ENCODE measurements at regions of chr9 and their contacts with region 1.

Region 1: DNA sequence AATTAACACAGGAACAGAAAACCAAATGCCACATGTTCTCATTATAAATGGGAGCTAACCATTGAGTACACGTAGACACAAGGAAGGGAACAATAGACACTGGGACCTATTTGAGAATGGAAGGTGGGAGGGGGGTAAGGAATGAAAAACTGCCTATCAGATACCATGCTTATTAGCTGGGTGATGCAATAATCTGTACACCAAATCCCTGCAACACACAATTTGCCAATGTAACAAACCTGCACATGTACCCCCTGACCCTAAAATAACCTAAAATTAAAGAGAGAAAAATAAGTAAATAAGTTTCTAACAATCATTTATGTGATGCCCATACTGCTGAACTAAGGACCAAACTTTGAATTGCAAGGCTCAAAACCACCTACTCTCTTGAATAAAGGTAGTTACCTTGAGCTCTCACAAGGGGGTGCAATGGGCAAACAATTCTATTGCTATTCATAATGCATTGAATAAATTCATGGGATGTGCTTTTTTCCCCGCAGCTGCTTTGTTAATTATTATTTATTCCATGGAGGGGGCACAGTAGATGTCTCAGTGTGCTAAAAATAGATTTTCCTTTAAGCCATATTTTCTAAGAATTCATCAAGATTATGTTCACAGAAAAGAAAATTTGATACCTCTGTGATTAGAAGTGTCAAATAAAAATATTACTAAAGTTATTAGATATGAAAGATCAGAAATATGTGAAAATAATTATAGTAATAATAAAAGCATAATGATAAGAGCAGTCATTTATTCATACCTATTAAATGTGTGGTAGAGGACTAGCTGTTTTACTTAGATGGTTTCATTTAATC is 76.2 kb upstream of the PTPN3 start:
- DNase-seq: no peak
- ATAC-seq: peak; percentile 77
- H3K4me3 Mint-ChIP-seq: no peak overlapping the region
- H3K27ac Mint-ChIP-seq: no peak overlapping the region
- H3K4me1 Mint-ChIP-seq: no peaks in the 10 kb centered on the region
- H3K27me3 Mint-ChIP-seq: no peaks in the 10 kb centered on the region
- CTCF ChIP-seq: peak; percentile 43

Region 2: GRCh38 chr9:109652964-109653363 is 78.7 kb after region 1 on chr9:
- CTCF ChIA-PET with region 1: interaction called, 13 read pairs
- POLR2A ChIA-PET with region 1: no interaction called
- DNase-seq: no peak
- ATAC-seq: peak; percentile 81
- H3K4me3 Mint-ChIP-seq: no peak overlapping the region
- H3K27ac Mint-ChIP-seq: no peak overlapping the region
- H3K4me1 Mint-ChIP-seq: peaks cover 8% of the 10 kb centered on the region
- H3K27me3 Mint-ChIP-seq: no peaks in the 10 kb centered on the region; the same call in 1 of the 2 replicates
- CTCF ChIP-seq: no peak

Region 3: DNA sequence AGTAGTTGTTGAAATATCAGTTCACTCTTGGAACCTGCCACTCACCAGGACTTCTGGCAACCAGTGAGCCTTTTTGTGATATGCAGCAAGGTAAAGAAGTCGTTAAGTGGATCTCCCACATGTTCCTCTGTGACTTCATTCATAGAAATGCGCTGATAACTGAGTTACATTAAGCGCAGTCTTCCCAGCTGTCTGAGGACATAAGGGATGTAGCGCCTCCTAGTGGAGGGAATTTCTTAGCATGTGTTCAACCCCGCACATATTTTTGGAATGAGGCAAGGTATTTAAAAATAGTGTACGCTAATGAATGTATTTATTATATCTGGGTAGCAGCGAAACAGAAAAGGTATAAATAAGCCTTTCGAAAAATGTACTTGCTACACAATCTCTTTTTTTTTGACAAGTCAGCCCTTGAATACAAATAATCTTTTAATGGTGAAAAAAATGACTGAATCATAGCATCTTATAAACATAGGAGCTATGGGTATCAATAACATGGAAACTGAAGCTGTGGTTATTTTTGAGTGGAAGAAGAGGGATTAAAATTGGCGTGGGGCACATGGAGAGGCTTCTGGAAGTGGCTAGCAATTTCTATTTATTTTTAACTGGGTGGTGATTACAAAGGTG is 243.7 kb after region 1 on chr9:
- CTCF ChIA-PET with region 1: interaction called, 16 read pairs
- POLR2A ChIA-PET with region 1: no interaction called
- DNase-seq: peak; percentile 62
- ATAC-seq: peak; percentile 78
- H3K4me3 Mint-ChIP-seq: no peak overlapping the region
- H3K27ac Mint-ChIP-seq: no peak overlapping the region
- H3K4me1 Mint-ChIP-seq: peaks cover 13% of the 10 kb centered on the region
- H3K27me3 Mint-ChIP-seq: no peaks in the 10 kb centered on the region
- CTCF ChIP-seq: peak; percentile 84